CD4-positive, alpha-beta memory T cell (primary cell): ENCODE measurements at regions of chr6 and their contacts with region 1.

Region 1: GRCh38 chr6:100116411-100117194 is 122.6 kb upstream of the MCHR2 start:
- DNase-seq: peak in 3 of 5 donors; percentile 3 to 9 (median 8)
- H3K4me3 ChIP-seq: no peak overlapping the region
- H3K4me3 Mint-ChIP-seq: no peak overlapping the region
- H3K27ac ChIP-seq: no peak overlapping the region
- H3K27ac Mint-ChIP-seq: no peak overlapping the region
- H3K4me1 ChIP-seq: no peaks in the 10 kb centered on the region
- H3K4me1 Mint-ChIP-seq: peaks cover 0 to 1% (median 0%) of the 10 kb centered on the region in 4 donors
- H3K27me3 ChIP-seq: no peaks in the 10 kb centered on the region
- H3K27me3 Mint-ChIP-seq: peaks cover 0 to 5% of the 10 kb centered on the region in 2 donors

Region 2: GRCh38 chr6:100050550-100050949 is 66.1 kb before region 1 on chr6:
- CTCF ChIA-PET with region 1: no interaction called
- POLR2A ChIA-PET with region 1: no interaction called
- intact Hi-C with region 1: no loop called
- DNase-seq: no peak
- H3K4me3 ChIP-seq: no peak overlapping the region
- H3K4me3 Mint-ChIP-seq: no peak overlapping the region
- H3K27ac ChIP-seq: no peak overlapping the region
- H3K27ac Mint-ChIP-seq: no peak overlapping the region
- H3K4me1 ChIP-seq: no peaks in the 10 kb centered on the region
- H3K4me1 Mint-ChIP-seq: no peaks in the 10 kb centered on the region
- H3K27me3 ChIP-seq: no peaks in the 10 kb centered on the region
- H3K27me3 Mint-ChIP-seq: no peaks in the 10 kb centered on the region

Region 3: DNA sequence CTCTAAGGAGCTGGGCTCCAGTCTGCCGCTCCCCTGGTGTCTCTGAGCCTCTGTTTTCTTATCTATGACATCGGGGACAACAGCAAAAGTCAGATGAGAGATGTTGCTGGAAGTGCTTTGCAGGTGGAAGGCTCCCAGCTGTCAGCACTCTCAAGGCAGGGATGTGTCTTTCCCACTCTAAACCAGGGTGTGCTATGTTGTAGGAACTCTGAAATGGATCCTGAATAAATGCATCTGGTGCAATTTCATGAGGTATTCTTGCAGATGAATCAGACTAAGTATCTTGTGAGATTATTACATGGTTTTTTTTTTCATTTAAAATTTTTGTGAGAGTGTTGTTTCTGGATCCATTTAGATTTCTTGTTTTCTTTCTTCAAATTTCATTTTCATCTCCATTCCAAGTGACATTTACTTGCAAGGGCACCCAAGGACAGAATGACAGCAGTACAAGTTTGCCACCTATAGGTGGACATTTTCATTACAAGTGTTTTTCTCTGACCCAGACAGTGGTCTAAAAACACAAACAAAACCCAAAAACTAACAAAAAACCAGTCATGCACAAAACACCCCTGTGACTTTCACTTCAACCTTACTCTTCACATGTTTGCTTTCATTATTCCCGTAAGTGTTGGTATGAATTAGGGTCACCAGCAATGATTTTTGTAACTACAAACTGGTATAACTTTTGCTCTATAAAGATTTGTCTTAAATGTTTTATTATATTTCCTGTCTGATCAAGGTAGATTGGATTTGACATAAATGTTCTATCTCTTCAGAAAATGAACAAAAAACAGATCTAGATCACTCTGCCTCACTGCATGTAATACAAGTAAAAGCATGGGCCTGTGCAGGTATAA is 362.8 kb after region 1 on chr6:
- CTCF ChIA-PET with region 1: interaction called, 4 read pairs
- POLR2A ChIA-PET with region 1: no interaction called
- intact Hi-C with region 1: loop called (anchors 1 kb)
- DNase-seq: peak in 1 of 5 donors; percentile 19
- H3K4me3 ChIP-seq: no peak overlapping the region
- H3K4me3 Mint-ChIP-seq: no peak overlapping the region
- H3K27ac ChIP-seq: no peak overlapping the region
- H3K27ac Mint-ChIP-seq: no peak overlapping the region
- H3K4me1 ChIP-seq: no peaks in the 10 kb centered on the region
- H3K4me1 Mint-ChIP-seq: no peaks in the 10 kb centered on the region
- H3K27me3 ChIP-seq: no peaks in the 10 kb centered on the region
- H3K27me3 Mint-ChIP-seq: peaks cover 9 to 16% of the 10 kb centered on the region in 2 donors

Region 4: GRCh38 chr6:100719883-100720682 is 603.5 kb after region 1 on chr6:
- CTCF ChIA-PET with region 1: no interaction called
- POLR2A ChIA-PET with region 1: no interaction called
- intact Hi-C with region 1: loop called (anchors 5 kb)
- DNase-seq: peak in 1 of 5 donors; percentile 2
- H3K4me3 ChIP-seq: no peak overlapping the region
- H3K4me3 Mint-ChIP-seq: peak overlapping the region in 6 of 8 donors; percentile 0 to 69 (median 35)
- H3K27ac ChIP-seq: no peak overlapping the region
- H3K27ac Mint-ChIP-seq: peak overlapping the region in 3 of 7 donors; percentile 5 to 24 (median 8)
- H3K4me1 ChIP-seq: no peaks in the 10 kb centered on the region
- H3K4me1 Mint-ChIP-seq: peaks cover 9 to 15% (median 12%) of the 10 kb centered on the region in 4 donors
- H3K27me3 ChIP-seq: no peaks in the 10 kb centered on the region
- H3K27me3 Mint-ChIP-seq: no peaks in the 10 kb centered on the region